ENCODE measurements at regions of chr11 and their contacts with region 1.

Region 1: DNA sequence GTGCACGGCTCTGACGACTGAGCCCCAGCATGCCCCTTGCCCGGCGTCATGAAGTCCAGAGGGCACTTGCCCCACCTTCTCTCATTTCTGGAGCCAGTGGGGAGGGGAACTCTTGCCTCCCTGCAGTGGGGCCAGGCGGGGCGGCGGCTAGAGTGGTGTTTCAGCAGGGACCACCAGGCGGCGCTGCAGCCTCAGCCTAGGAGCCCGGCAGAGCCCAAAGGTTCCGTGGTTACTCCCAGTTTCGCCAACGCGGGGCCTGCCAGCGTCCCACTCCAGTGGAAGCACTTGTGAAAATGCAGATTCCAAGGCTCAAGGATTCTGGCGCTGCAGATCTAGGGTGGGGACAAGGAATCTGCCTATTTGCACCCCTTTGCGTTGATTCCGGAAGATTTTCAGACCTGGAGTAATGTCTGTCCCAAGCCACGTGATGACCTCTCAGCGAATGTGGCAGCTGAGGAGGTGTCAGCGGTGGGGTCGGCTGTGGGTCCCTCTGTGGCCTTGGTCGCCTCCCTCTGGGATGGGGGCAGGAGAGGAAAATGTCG is 55.7 kb downstream of the CD82 start:
- DNase-seq: no peak
- H3K4me3 ChIP-seq: no peak overlapping the region
- H3K27me3 ChIP-seq: no peaks in the 10 kb centered on the region
- CTCF ChIP-seq: peak; percentile 98

Region 2: DNA sequence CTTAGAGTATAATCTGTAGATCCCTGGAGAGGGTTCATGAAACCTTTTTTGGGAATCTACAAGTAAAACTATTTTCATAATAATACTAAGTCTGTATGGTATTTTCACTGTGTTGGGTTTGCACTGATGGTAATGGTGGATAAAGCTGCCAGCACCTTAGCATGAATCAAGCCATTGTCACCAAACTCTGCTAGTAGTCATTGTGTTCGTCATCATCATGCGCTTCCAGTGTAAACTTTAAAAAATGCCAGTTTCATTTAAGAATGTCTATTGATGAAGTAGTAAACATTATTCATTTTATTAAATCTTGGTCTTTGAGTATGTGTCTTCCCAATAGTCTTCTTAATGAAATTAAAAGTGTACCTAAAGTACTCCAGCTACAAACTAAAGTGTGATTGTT is 725.6 kb before region 1 on chr11:
- CTCF ChIA-PET with region 1: no interaction called
- POLR2A ChIA-PET with region 1: no interaction called
- DNase-seq: no peak
- H3K4me3 ChIP-seq: no peak overlapping the region
- H3K27me3 ChIP-seq: no peaks in the 10 kb centered on the region
- CTCF ChIP-seq: no peak

Region 3: GRCh38 chr11:44243595-44244343 is 377.4 kb before region 1 on chr11:
- CTCF ChIA-PET with region 1: no interaction called
- POLR2A ChIA-PET with region 1: no interaction called
- DNase-seq: no peak
- H3K4me3 ChIP-seq: no peak overlapping the region
- H3K27me3 ChIP-seq: no peaks in the 10 kb centered on the region
- CTCF ChIP-seq: no peak

Region 4: DNA sequence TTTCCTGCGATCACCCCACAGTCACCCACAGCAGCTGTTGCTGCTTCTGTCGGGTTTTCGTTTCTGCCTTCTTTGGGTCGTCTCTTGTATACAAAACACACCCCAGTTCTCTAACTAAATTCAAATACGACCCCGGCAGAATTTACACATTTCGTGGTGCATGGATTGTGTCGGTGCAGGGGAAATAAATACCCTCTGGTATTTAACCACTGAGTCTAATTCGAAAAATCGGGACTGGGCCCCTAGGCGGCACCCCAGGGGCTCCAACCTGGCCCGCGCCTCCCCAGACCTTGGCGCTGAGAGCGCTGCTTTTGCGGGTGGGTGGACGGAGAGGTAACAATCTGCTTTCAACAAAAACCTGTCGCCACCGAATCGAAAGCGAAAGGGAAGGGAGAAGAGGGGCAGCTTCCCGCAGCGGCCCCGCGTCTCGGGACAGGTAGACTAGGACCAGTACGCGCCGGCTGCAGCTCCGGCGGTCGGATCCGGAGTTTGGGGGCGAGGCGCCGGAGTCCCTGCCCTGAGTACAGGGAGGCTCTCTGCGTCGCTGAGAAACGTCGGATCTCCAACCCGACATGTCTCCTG is 315.6 kb before region 1 on chr11:
- CTCF ChIA-PET with region 1: no interaction called
- POLR2A ChIA-PET with region 1: no interaction called
- DNase-seq: no peak
- H3K4me3 ChIP-seq: peak overlapping the region; percentile 45
- H3K27me3 ChIP-seq: peaks cover 10% of the 10 kb centered on the region
- CTCF ChIP-seq: peak; percentile 14; the same call in 1 of the 2 replicates

Region 5: DNA sequence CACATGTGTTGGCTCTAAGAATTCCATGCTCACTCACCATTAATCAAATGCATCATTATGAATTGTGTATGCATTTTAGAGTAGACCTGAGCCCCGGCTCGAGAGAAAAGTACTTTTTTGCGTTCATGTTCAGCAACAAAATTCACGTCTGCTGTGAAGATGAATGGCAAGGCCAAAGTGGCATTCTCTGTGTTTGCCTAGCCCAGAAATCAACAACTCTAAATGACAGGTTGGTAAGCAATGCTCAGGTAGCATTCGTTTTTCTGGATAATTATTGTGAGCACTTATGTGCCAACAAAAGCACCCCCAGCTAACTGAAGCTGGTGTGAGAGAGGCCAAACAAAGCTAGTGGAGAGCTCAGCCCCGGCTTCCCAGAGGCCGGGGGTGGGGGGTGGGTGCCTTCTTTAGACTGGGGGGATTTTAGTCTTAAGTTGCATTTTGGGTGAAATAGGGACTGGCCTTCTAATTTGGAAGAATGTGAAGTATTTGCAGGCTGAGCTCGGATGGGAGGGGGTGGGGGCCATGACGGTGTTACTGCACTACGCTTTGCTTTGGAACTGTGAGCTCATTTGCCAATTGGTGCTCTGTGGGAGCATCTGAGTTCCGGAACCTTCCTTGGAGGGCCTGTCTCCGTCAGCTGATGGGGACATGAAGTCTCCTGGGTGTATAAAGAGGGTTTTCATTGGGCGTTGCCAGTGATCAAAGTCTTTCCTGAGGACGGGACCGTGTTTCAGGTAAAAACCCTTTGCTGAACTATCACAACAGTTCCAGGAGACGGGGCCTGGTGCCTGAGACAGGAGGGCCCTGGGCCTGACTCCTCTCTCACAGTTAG is 282.3 kb before region 1 on chr11:
- CTCF ChIA-PET with region 1: no interaction called
- POLR2A ChIA-PET with region 1: no interaction called
- DNase-seq: no peak
- H3K4me3 ChIP-seq: no peak overlapping the region
- H3K27me3 ChIP-seq: peaks cover 12% of the 10 kb centered on the region; the same call in 1 of the 2 replicates
- CTCF ChIP-seq: no peak

Region 6: DNA sequence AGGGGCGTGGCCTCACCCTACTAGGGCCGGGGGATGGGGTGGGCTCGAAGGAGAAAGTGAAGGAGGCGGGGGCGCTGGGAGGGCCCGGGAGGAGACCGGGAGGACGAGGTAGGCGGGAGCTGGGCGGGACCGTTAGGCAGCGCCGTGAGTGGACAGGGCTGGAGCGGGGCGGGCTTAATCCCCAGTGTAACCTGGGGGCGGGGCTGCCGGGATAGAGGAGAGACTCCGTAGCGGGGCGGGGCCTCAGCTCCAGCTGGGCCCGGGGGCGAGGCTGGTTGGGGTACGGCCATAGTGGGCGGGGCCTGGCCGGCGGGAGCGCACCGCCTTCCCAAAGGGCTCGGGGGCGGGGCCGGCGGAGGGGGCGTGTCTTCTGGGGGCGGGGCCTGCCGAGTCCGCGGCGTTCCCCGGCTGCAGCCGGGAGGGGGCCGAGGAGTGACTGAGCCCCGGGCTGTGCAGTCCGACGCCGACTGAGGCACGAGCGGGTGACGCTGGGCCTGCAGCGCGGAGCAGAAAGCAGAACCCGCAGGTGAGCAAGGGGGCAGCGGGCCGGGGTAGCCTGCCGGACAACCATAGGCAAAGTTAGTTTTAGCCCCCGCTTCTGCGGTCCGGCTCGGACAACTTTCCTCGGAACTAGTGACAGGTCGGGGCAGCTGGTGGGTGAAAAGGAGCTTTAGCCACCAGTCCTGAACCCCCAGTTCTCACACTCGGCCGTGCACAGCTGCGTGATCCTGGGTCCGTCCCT is 55.8 kb before region 1 on chr11 and contains the start of gene CD82:
- CTCF ChIA-PET with region 1: interaction called, 606 read pairs
- POLR2A ChIA-PET with region 1: no interaction called
- DNase-seq: peak; percentile 86
- H3K4me3 ChIP-seq: peak within 1 kb of the TSS; percentile 46
- H3K27me3 ChIP-seq: no peaks in the 10 kb centered on the region
- CTCF ChIP-seq: peak; percentile 39
- polyA plus RNA-seq, gene CD82: 13.4 and 28.1 TPM in 2 replicates

Region 7: GRCh38 chr11:44600839-44601383 is 20.3 kb before region 1 on chr11:
- CTCF ChIA-PET with region 1: interaction called, 17 read pairs
- POLR2A ChIA-PET with region 1: no interaction called
- DNase-seq: no peak
- H3K4me3 ChIP-seq: no peak overlapping the region
- H3K27me3 ChIP-seq: no peaks in the 10 kb centered on the region
- CTCF ChIP-seq: no peak

Region 8: DNA sequence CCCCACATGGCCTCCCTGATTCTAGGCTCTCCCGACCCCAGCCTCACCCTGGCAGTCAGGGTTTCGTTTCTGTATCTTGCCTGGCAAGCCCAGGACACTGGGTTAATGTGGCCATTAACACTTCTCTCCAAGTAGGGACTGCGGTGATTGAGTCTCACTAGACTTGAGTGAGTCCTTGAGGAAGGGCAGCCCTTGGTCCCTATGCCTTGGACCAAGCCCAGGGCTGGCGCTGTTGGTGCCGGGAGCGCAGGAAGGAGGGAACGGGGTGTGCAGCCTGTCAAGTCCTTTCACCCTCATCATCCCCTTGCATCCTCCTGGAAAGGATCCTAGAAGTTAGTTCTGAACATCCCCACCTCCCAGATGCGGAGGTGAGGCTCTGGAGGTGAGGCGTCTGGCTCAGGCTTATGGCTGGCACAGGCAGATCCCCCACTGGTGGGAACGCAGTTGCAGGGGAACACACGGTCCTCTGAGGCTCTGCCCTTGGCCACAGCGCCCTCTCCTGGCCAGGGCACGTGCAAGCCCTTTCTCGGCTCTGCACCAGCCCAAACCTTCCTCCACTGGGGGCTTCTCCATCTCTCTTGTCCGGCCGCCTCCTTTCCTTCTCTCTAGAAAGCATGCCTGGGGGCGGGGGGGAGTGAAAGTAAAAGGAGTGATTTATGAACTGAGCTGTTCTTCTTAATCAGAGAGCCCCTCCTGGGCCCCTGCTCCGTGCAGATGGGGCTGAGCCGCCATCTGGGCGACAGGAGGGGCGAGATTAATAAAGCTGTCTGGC is 272.8 kb after region 1 on chr11:
- CTCF ChIA-PET with region 1: interaction called, 45 read pairs
- POLR2A ChIA-PET with region 1: no interaction called
- DNase-seq: no peak
- H3K4me3 ChIP-seq: no peak overlapping the region
- H3K27me3 ChIP-seq: peaks cover 10% of the 10 kb centered on the region; the same call in 1 of the 2 replicates
- CTCF ChIP-seq: peak; percentile 96

Region 9: DNA sequence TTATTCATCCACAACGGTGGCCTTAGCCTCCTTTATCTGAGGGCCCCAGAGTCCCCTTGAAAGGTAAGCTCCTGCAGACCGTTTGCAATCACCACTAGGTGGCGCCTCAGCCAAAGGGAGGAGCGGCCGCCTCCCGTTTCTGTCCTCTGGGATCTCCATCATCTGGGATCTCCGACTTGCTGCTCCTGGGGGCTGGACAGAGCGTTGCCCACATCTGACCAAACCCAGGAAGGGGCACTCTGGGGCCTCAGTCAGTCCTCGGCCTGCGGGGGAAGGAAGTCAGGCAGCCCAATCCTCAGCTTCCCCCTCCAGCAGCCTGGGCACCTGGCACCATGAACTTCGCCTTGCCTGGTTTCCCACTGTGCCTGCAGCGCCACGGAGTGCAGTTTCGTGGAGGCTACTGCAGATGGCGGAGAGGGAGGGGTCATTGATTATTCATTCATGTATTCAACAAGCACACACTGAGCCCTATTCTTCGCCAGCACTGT is 306.0 kb after region 1 on chr11:
- CTCF ChIA-PET with region 1: interaction called, 26 read pairs
- POLR2A ChIA-PET with region 1: no interaction called
- DNase-seq: no peak
- H3K4me3 ChIP-seq: no peak overlapping the region
- H3K27me3 ChIP-seq: no peaks in the 10 kb centered on the region; the same call in 1 of the 2 replicates
- CTCF ChIP-seq: peak; percentile 92